Natural killer cell (primary cell): ENCODE measurements at regions of chr17 and their contacts with region 1.

Region 1: GRCh38 chr17:74478420-74479100 is 12.1 kb downstream of the CD300A start:
- DNase-seq: peak in 1 of 2 donors; percentile 72
- ATAC-seq: peak; percentile 35 to 75 (median 38)
- H3K4me3 ChIP-seq: no peak overlapping the region
- H3K4me3 Mint-ChIP-seq: peak overlapping the region; percentile 73
- H3K27ac ChIP-seq: peak overlapping the region; percentile 73
- H3K27ac Mint-ChIP-seq: peak overlapping the region; percentile 92 to 93
- H3K4me1 ChIP-seq: peaks cover 81% of the 10 kb centered on the region
- H3K4me1 Mint-ChIP-seq: peaks cover 86 to 97% of the 10 kb centered on the region in 2 donors
- H3K27me3 ChIP-seq: no peaks in the 10 kb centered on the region
- H3K27me3 Mint-ChIP-seq: no peaks in the 10 kb centered on the region
- CTCF ChIP-seq: no peak

Region 2: GRCh38 chr17:74055508-74056160 is 422.9 kb before region 1 on chr17:
- intact Hi-C with region 1: no loop called
- DNase-seq: no peak
- ATAC-seq: no peak
- H3K4me3 ChIP-seq: no peak overlapping the region
- H3K4me3 Mint-ChIP-seq: no peak overlapping the region
- H3K27ac ChIP-seq: no peak overlapping the region
- H3K27ac Mint-ChIP-seq: no peak overlapping the region
- H3K4me1 ChIP-seq: no peaks in the 10 kb centered on the region
- H3K4me1 Mint-ChIP-seq: no peaks in the 10 kb centered on the region
- H3K27me3 ChIP-seq: no peaks in the 10 kb centered on the region
- H3K27me3 Mint-ChIP-seq: peaks cover 23 to 45% of the 10 kb centered on the region in 2 donors
- CTCF ChIP-seq: no peak

Region 3: GRCh38 chr17:74464730-74465377 is 13.7 kb before region 1 on chr17:
- intact Hi-C with region 1: loop called (anchors 1 kb)
- DNase-seq: peak in 1 of 2 donors; percentile 38
- ATAC-seq: peak in 1 of 3 donors; percentile 4
- H3K4me3 ChIP-seq: no peak overlapping the region
- H3K4me3 Mint-ChIP-seq: no peak overlapping the region
- H3K27ac ChIP-seq: peak overlapping the region; percentile 80
- H3K27ac Mint-ChIP-seq: no peak overlapping the region
- H3K4me1 ChIP-seq: peaks cover 71% of the 10 kb centered on the region
- H3K4me1 Mint-ChIP-seq: peaks cover 24 to 42% of the 10 kb centered on the region in 2 donors
- H3K27me3 ChIP-seq: no peaks in the 10 kb centered on the region
- H3K27me3 Mint-ChIP-seq: no peaks in the 10 kb centered on the region
- CTCF ChIP-seq: no peak

Region 4: DNA sequence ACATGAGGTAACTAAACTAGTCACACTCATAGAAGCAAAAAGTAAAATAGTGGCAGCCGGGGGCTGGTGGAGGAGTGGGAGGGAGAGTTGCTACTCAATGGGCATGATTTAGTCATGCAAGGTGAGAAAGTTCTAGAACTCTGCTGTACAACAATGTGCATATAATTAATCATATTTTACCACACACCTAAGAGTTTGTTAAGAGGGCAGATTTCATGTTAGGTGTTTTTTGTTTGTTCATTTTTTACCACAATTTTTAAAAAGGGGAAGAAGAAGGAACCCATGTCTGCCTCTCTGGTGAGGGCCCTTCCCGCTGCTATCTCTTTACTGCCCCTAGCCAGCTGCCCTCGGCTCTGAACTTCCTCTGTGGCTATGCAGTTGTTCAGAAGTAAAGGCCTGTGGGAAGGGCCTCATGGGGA is 41.5 kb after region 1 on chr17:
- intact Hi-C with region 1: loop called (anchors 2 kb)
- DNase-seq: no peak
- ATAC-seq: peak in 2 of 3 donors; percentile 63 to 65
- H3K4me3 ChIP-seq: no peak overlapping the region
- H3K4me3 Mint-ChIP-seq: no peak overlapping the region
- H3K27ac ChIP-seq: peak overlapping the region; percentile 81
- H3K27ac Mint-ChIP-seq: peak overlapping the region; percentile 77 to 86
- H3K4me1 ChIP-seq: peaks cover 37% of the 10 kb centered on the region
- H3K4me1 Mint-ChIP-seq: peaks cover 34 to 46% of the 10 kb centered on the region in 2 donors
- H3K27me3 ChIP-seq: no peaks in the 10 kb centered on the region
- H3K27me3 Mint-ChIP-seq: no peaks in the 10 kb centered on the region
- CTCF ChIP-seq: no peak

Region 5: DNA sequence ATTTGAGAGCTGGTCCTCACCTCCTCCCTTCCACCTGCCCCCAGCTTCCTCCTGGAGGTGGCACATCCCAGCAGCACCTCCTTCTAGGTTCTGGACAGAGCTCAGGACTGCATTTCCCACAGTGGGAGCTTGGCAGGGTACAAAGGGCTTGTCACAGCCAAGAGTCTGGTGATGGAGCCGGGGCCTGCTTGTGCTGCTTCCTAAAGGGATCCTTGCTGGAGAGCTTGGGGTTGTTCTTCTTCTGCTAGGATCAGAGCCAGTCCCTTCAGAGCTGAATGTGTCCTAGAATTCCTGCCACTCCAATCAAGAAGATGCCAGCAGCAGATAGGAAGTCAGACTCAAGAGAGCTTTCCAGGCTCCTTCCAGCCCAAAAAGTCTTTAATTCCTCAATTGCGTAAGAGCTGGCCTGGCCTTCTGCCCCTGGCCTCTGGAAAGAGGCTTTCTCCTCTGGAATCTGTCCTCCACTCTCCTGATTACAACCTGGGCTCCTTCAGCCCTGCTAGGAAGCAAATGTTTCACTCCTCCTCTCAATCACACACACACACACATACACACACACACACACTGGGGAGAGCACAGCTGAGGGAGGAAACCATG is 140.6 kb after region 1 on chr17:
- intact Hi-C with region 1: no loop called
- DNase-seq: no peak
- ATAC-seq: no peak
- H3K4me3 ChIP-seq: no peak overlapping the region
- H3K4me3 Mint-ChIP-seq: no peak overlapping the region
- H3K27ac ChIP-seq: no peak overlapping the region
- H3K27ac Mint-ChIP-seq: no peak overlapping the region
- H3K4me1 ChIP-seq: peaks cover under 1% of the 10 kb centered on the region
- H3K4me1 Mint-ChIP-seq: peaks cover 0 to 32% of the 10 kb centered on the region in 2 donors
- H3K27me3 ChIP-seq: no peaks in the 10 kb centered on the region
- H3K27me3 Mint-ChIP-seq: peaks cover 47 to 55% of the 10 kb centered on the region in 2 donors
- CTCF ChIP-seq: no peak

Region 6: GRCh38 chr17:74736513-74737298 is 258.1 kb after region 1 on chr17 and contains the start of gene RAB37:
- intact Hi-C with region 1: loop called (anchors 5 kb)
- DNase-seq: peak; percentile 57 to 78
- ATAC-seq: peak; percentile 29 to 69 (median 34)
- H3K4me3 ChIP-seq: peak within 1 kb of the TSS; percentile 90
- H3K4me3 Mint-ChIP-seq: peak within 1 kb of the TSS; percentile 92
- H3K27ac ChIP-seq: peak within 1 kb of the TSS; percentile 66
- H3K27ac Mint-ChIP-seq: peak within 1 kb of the TSS; percentile 90 to 93
- H3K4me1 ChIP-seq: peaks cover 92% of the 10 kb centered on the region
- H3K4me1 Mint-ChIP-seq: peaks cover 34 to 43% of the 10 kb centered on the region in 2 donors
- H3K27me3 ChIP-seq: no peaks in the 10 kb centered on the region
- H3K27me3 Mint-ChIP-seq: peaks cover 0 to 4% of the 10 kb centered on the region in 2 donors
- CTCF ChIP-seq: peak; percentile 56
- total RNA-seq, gene RAB37: 150 to 184 (median 169) TPM